CD8-positive, alpha-beta T cell (primary cell): ENCODE measurements at regions of chr21 and their contacts with region 1.

Region 1: GRCh38 chr21:43810505-43811261 is 21.3 kb downstream of the RRP1 start:
- DNase-seq: peak; percentile 81 to 93 (median 84)
- ATAC-seq: peak; percentile 98
- H3K4me3 ChIP-seq: no peak overlapping the region
- H3K4me3 Mint-ChIP-seq: no peak overlapping the region
- H3K27ac ChIP-seq: no peak overlapping the region
- H3K27ac Mint-ChIP-seq: no peak overlapping the region
- H3K4me1 ChIP-seq: peaks cover 9% of the 10 kb centered on the region
- H3K4me1 Mint-ChIP-seq: peaks cover 7% of the 10 kb centered on the region
- H3K27me3 ChIP-seq: no peaks in the 10 kb centered on the region
- H3K27me3 Mint-ChIP-seq: no peaks in the 10 kb centered on the region
- CTCF ChIP-seq: peak; percentile 86

Region 2: DNA sequence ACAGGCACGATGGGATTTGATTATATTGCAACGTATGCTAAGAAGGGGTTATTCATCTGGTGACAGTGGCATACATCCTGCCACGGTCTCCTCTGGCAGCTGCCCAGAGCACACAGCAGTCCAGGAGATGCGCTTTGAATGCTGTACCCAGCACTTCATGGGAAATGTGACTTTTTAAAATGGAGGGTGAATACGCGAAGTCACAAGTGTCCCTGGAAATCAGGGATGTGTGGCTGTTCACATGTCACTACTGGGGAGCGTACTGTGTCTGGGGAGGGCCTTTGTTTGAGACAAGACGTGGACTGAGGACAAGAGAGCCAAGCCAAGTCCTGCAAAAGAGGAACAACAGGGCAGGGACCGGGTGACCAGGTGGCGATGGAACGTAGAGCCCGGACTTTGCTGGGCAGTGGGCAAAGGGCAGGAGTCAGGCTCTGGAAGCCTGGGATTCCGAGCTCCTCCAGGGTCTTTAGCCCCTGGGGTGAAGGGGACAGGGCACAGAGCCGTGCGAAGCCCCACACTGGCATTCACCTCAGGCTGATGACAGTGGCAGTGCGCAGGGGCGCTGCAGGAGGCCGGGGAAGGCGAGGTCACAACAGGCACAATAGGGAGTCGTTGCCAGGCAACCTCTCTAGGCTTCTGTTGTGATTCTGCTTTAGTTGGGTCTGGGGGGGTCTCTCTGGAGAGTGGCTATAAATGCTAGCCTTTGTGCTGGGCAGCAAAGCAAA is 1789.2 kb before region 1 on chr21:
- CTCF ChIA-PET with region 1: no interaction called
- POLR2A ChIA-PET with region 1: no interaction called
- intact Hi-C with region 1: no loop called
- DNase-seq: no peak
- ATAC-seq: no peak
- H3K4me3 ChIP-seq: no peak overlapping the region
- H3K4me3 Mint-ChIP-seq: no peak overlapping the region
- H3K27ac ChIP-seq: no peak overlapping the region
- H3K27ac Mint-ChIP-seq: no peak overlapping the region
- H3K4me1 ChIP-seq: no peaks in the 10 kb centered on the region
- H3K4me1 Mint-ChIP-seq: no peaks in the 10 kb centered on the region
- H3K27me3 ChIP-seq: no peaks in the 10 kb centered on the region
- H3K27me3 Mint-ChIP-seq: no peaks in the 10 kb centered on the region
- CTCF ChIP-seq: no peak

Region 3: GRCh38 chr21:44304877-44305293 is 494.2 kb after region 1 on chr21:
- CTCF ChIA-PET with region 1: no interaction called
- POLR2A ChIA-PET with region 1: no interaction called
- intact Hi-C with region 1: loop called in 1 of 2 experiments (anchors 2 kb)
- DNase-seq: peak in 6 of 9 experiments; percentile 25 to 65 (median 53)
- ATAC-seq: peak; percentile 50
- H3K4me3 ChIP-seq: no peak overlapping the region
- H3K4me3 Mint-ChIP-seq: no peak overlapping the region
- H3K27ac ChIP-seq: no peak overlapping the region
- H3K27ac Mint-ChIP-seq: peak overlapping the region; percentile 90
- H3K4me1 ChIP-seq: peaks cover 32% of the 10 kb centered on the region
- H3K4me1 Mint-ChIP-seq: peaks cover 33% of the 10 kb centered on the region
- H3K27me3 ChIP-seq: no peaks in the 10 kb centered on the region
- H3K27me3 Mint-ChIP-seq: no peaks in the 10 kb centered on the region
- CTCF ChIP-seq: peak; percentile 33